Activated CD4-positive, alpha-beta memory T cell treated with anti-CD3 and anti-CD28 coated beads for 36 hours (primary cell): ENCODE measurements at regions of chr3 and their contacts with region 1.

Region 1: GRCh38 chr3:13657660-13658435 is 108.9 kb downstream of the FBLN2 start:
- DNase-seq: peak; percentile 75
- H3K4me3 Mint-ChIP-seq: no peak overlapping the region
- H3K27ac Mint-ChIP-seq: no peak overlapping the region
- H3K4me1 Mint-ChIP-seq: peaks cover 27% of the 10 kb centered on the region
- H3K27me3 Mint-ChIP-seq: peaks cover 12% of the 10 kb centered on the region

Region 2: GRCh38 chr3:13590841-13591520 is 66.9 kb before region 1 on chr3:
- CTCF ChIA-PET with region 1: no interaction called
- POLR2A ChIA-PET with region 1: no interaction called
- intact Hi-C with region 1: no loop called
- DNase-seq: no peak
- H3K4me3 Mint-ChIP-seq: no peak overlapping the region
- H3K27ac Mint-ChIP-seq: no peak overlapping the region
- H3K4me1 Mint-ChIP-seq: no peaks in the 10 kb centered on the region
- H3K27me3 Mint-ChIP-seq: no peaks in the 10 kb centered on the region

Region 3: GRCh38 chr3:13670292-13670691 is 12.4 kb after region 1 on chr3:
- CTCF ChIA-PET with region 1: interaction called, 11 read pairs
- POLR2A ChIA-PET with region 1: no interaction called
- intact Hi-C with region 1: no loop called
- DNase-seq: no peak
- H3K4me3 Mint-ChIP-seq: no peak overlapping the region
- H3K27ac Mint-ChIP-seq: no peak overlapping the region
- H3K4me1 Mint-ChIP-seq: no peaks in the 10 kb centered on the region
- H3K27me3 Mint-ChIP-seq: peaks cover 9% of the 10 kb centered on the region